Activated T-helper 2 cell treated with anti-CD3 and anti-CD28 coated beads, Interferon-gamma antibody, Interleukin-2, Interleukin-4, amounts not matched to agents 10 μg/mL and 5 μg/mL and 100 μg/mL, durations not matched to agents 14 hours and 24 hours and 36 hours (primary cell): ENCODE measurements at regions of chr1 and their contacts with region 1.

Region 1: DNA sequence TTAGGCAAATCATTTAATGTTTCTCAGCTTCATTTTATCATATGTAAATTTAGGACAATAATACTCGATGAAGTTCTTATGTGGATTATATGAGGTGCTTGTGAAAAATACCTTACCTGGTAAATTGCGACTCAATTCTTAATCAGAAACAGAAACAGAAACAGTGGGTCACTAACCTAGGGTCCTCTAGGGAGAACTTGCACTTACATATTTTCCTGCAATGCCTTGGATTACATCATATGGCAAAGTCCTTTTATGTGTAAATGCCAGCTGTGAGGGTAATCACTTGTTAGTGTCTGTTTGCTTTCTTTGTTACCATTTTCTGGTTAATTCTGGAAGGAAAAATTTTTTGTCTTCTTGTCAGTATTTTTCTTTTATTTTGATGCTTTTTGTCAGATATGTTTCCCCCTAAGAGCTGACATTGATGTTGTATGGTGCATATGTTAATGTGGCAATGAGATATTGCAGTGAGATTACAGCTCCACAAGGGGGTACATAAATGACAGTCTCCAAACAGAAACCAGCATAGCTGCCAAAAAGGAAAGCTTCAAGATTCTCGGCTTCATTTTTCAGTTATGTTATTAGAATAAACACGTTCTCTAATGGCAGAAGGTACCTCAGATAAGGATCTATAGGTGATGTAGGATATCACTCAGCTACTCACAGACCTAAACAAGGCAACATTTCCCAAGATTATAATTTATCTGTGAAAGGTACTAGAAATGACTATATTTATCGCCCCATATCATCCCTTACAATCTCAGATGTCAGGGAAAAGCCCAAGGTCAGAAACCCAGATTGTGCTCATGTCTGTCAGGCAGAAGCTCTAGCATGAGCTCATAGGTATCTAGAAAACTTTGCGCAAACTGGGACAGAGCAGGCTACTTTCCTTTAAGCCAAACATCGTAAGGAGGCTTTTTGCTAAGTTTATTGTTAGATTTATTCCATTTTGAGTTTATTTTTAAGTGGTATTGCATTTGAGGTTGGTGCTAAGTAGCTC is 119.9 kb downstream of the FASLG start:
- DNase-seq: no peak
- H3K4me3 Mint-ChIP-seq: no peak overlapping the region
- H3K27ac Mint-ChIP-seq: no peak overlapping the region
- H3K4me1 Mint-ChIP-seq: peaks cover 16% of the 10 kb centered on the region
- H3K27me3 Mint-ChIP-seq: peaks cover 31% of the 10 kb centered on the region

Region 2: GRCh38 chr1:172837816-172838680 is 59.3 kb after region 1 on chr1:
- intact Hi-C with region 1: loop called (anchors 1 kb)
- DNase-seq: no peak
- H3K4me3 Mint-ChIP-seq: no peak overlapping the region
- H3K27ac Mint-ChIP-seq: no peak overlapping the region
- H3K4me1 Mint-ChIP-seq: peaks cover 29% of the 10 kb centered on the region
- H3K27me3 Mint-ChIP-seq: peaks cover 53% of the 10 kb centered on the region

Region 3: GRCh38 chr1:173330149-173330951 is 551.6 kb after region 1 on chr1:
- intact Hi-C with region 1: loop called (anchors 5 kb)
- DNase-seq: no peak
- H3K4me3 Mint-ChIP-seq: no peak overlapping the region
- H3K27ac Mint-ChIP-seq: no peak overlapping the region
- H3K4me1 Mint-ChIP-seq: peaks cover 16% of the 10 kb centered on the region
- H3K27me3 Mint-ChIP-seq: peaks cover 2% of the 10 kb centered on the region